Endothelial cell of umbilical vein (primary cell): ENCODE measurements at regions of chr1 and their contacts with region 1.

Region 1: GRCh38 chr1:231971397-231972104 is 345.0 kb downstream of the DISC1 start:
- DNase-seq: peak; percentile 94
- H3K4me3 ChIP-seq: peak overlapping the region in 1 of 3 experiments; percentile 46
- H3K27ac ChIP-seq: peak overlapping the region; percentile 59
- H3K4me1 ChIP-seq: peaks cover 17% of the 10 kb centered on the region
- H3K27me3 ChIP-seq: no peaks in the 10 kb centered on the region
- CTCF ChIP-seq: no peak
- POLR2A ChIP-seq: no peak

Region 2: GRCh38 chr1:231724876-231725724 is 246.5 kb before region 1 on chr1:
- CTCF ChIA-PET with region 1: no interaction called
- POLR2A ChIA-PET with region 1: no interaction called
- dilution Hi-C with region 1: no loop called
- intact Hi-C with region 1: no loop called
- DNase-seq: peak; percentile 58
- H3K4me3 ChIP-seq: no peak overlapping the region
- H3K27ac ChIP-seq: no peak overlapping the region
- H3K4me1 ChIP-seq: no peaks in the 10 kb centered on the region
- H3K27me3 ChIP-seq: no peaks in the 10 kb centered on the region
- CTCF ChIP-seq: peak; percentile 54 to 56
- POLR2A ChIP-seq: no peak

Region 3: GRCh38 chr1:231853588-231854207 is 117.9 kb before region 1 on chr1:
- CTCF ChIA-PET with region 1: no interaction called
- POLR2A ChIA-PET with region 1: no interaction called
- dilution Hi-C with region 1: no loop called
- intact Hi-C with region 1: no loop called
- DNase-seq: no peak
- H3K4me3 ChIP-seq: no peak overlapping the region
- H3K27ac ChIP-seq: no peak overlapping the region
- H3K4me1 ChIP-seq: no peaks in the 10 kb centered on the region
- H3K27me3 ChIP-seq: no peaks in the 10 kb centered on the region
- CTCF ChIP-seq: no peak
- POLR2A ChIP-seq: no peak

Region 4: DNA sequence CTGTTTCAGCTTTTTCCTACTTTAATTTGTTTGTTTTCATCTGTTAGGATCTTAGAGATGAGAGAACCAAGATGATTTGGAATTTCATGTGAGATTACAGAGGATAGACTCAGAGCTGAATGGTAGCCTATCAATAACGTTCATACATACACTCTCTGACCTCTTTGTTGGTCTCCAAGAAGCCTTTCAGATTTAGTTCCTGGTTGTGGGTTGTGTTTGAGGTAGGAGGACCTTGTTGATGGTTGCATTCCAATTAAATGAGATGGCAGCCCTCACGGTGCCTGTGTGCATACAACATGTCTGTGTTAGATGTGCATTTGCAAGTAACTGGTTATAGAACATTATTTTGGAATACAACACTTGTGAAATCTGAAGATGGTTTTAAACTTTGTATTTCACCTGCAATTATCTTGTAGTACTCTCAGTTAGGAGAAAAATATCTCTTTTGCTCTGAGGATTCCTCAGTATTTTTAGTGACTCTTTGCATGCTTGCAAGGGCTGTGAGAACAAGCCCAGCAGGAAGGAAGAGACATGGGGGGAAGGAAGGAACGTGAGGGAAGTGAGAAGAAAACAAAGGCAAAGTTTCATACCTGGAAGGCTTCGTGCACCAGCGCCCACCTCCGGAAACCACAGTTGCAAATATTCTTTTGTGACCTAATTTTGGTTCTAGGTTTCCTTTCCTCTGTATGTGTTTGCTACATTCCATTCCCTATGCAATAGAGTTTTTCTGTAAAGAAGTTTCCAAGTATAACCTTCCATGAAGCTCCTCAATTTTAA is 53.1 kb before region 1 on chr1:
- CTCF ChIA-PET with region 1: interaction called, 3 read pairs
- POLR2A ChIA-PET with region 1: no interaction called
- dilution Hi-C with region 1: no loop called
- intact Hi-C with region 1: loop called (anchors 1 kb)
- DNase-seq: no peak
- H3K4me3 ChIP-seq: no peak overlapping the region
- H3K27ac ChIP-seq: peak overlapping the region; percentile 40
- H3K4me1 ChIP-seq: peaks cover 34% of the 10 kb centered on the region
- H3K27me3 ChIP-seq: no peaks in the 10 kb centered on the region
- CTCF ChIP-seq: no peak
- POLR2A ChIP-seq: no peak

Region 5: GRCh38 chr1:231931846-231932454 is 39.6 kb before region 1 on chr1:
- CTCF ChIA-PET with region 1: interaction called, 3 read pairs
- POLR2A ChIA-PET with region 1: no interaction called
- dilution Hi-C with region 1: no loop called
- intact Hi-C with region 1: loop called (anchors 1 kb)
- DNase-seq: no peak
- H3K4me3 ChIP-seq: no peak overlapping the region
- H3K27ac ChIP-seq: no peak overlapping the region
- H3K4me1 ChIP-seq: peaks cover 20% of the 10 kb centered on the region
- H3K27me3 ChIP-seq: no peaks in the 10 kb centered on the region
- CTCF ChIP-seq: peak; percentile 42 to 53
- POLR2A ChIP-seq: no peak

Region 6: DNA sequence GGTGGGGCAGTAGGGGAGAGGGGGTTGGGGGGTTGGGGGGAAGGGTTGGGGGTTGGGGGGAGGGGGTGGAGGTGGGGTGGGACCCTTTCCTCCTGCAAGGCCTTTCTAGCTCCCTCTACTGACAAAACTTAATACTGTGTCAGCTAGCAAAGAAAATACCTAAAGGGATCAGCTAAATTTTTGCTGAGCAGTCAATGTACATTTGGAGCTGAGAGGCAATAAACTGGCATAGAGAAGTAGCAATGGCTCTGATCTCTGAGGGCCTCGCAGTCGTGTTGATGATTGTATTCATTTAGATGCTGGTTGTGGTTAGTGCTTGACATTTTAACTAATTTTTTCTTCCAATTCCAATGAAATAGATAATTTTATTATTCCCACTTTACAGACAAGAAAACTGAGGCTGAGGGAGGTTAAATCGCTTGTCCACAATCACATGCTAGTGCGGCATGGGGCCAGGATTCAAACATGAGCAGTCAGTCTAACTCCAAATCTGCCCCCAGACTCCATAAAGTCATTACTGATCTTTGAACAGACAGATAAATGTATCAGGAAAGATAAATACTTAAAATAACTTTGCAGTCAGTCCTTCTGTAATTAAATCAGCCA is 12.1 kb after region 1 on chr1:
- CTCF ChIA-PET with region 1: interaction called, 14 read pairs
- POLR2A ChIA-PET with region 1: no interaction called
- dilution Hi-C with region 1: no loop called
- intact Hi-C with region 1: no loop called
- DNase-seq: no peak
- H3K4me3 ChIP-seq: no peak overlapping the region
- H3K27ac ChIP-seq: no peak overlapping the region
- H3K4me1 ChIP-seq: no peaks in the 10 kb centered on the region
- H3K27me3 ChIP-seq: no peaks in the 10 kb centered on the region
- CTCF ChIP-seq: peak in 1 of 2 donors; percentile 12
- POLR2A ChIP-seq: no peak

Region 7: GRCh38 chr1:231990388-231990787 is 18.8 kb after region 1 on chr1:
- CTCF ChIA-PET with region 1: no interaction called
- POLR2A ChIA-PET with region 1: interaction called, 5 read pairs
- dilution Hi-C with region 1: no loop called
- intact Hi-C with region 1: loop called (anchors 1 kb)
- DNase-seq: peak; percentile 93
- H3K4me3 ChIP-seq: no peak overlapping the region
- H3K27ac ChIP-seq: peak overlapping the region; percentile 23
- H3K4me1 ChIP-seq: peaks cover 18% of the 10 kb centered on the region
- H3K27me3 ChIP-seq: no peaks in the 10 kb centered on the region
- CTCF ChIP-seq: no peak
- POLR2A ChIP-seq: peak; percentile 65

Region 8: GRCh38 chr1:232012773-232013386 is 41.3 kb after region 1 on chr1:
- CTCF ChIA-PET with region 1: no interaction called
- POLR2A ChIA-PET with region 1: no interaction called
- dilution Hi-C with region 1: no loop called
- intact Hi-C with region 1: loop called (anchors 1 kb)
- DNase-seq: peak; percentile 97
- H3K4me3 ChIP-seq: peak overlapping the region in 1 of 3 experiments; percentile 14
- H3K27ac ChIP-seq: peak overlapping the region; percentile 80
- H3K4me1 ChIP-seq: peaks cover 27% of the 10 kb centered on the region
- H3K27me3 ChIP-seq: no peaks in the 10 kb centered on the region
- CTCF ChIP-seq: no peak
- POLR2A ChIP-seq: no peak

Region 9: GRCh38 chr1:232111611-232112010 is 140.1 kb after region 1 on chr1:
- CTCF ChIA-PET with region 1: no interaction called
- POLR2A ChIA-PET with region 1: no interaction called
- dilution Hi-C with region 1: no loop called
- intact Hi-C with region 1: no loop called
- DNase-seq: no peak
- H3K4me3 ChIP-seq: no peak overlapping the region
- H3K27ac ChIP-seq: no peak overlapping the region
- H3K4me1 ChIP-seq: no peaks in the 10 kb centered on the region
- H3K27me3 ChIP-seq: no peaks in the 10 kb centered on the region
- CTCF ChIP-seq: no peak
- POLR2A ChIP-seq: no peak